AG04450 (cell line): ENCODE measurements at regions of chr19 and their contacts with region 1.

Region 1: DNA sequence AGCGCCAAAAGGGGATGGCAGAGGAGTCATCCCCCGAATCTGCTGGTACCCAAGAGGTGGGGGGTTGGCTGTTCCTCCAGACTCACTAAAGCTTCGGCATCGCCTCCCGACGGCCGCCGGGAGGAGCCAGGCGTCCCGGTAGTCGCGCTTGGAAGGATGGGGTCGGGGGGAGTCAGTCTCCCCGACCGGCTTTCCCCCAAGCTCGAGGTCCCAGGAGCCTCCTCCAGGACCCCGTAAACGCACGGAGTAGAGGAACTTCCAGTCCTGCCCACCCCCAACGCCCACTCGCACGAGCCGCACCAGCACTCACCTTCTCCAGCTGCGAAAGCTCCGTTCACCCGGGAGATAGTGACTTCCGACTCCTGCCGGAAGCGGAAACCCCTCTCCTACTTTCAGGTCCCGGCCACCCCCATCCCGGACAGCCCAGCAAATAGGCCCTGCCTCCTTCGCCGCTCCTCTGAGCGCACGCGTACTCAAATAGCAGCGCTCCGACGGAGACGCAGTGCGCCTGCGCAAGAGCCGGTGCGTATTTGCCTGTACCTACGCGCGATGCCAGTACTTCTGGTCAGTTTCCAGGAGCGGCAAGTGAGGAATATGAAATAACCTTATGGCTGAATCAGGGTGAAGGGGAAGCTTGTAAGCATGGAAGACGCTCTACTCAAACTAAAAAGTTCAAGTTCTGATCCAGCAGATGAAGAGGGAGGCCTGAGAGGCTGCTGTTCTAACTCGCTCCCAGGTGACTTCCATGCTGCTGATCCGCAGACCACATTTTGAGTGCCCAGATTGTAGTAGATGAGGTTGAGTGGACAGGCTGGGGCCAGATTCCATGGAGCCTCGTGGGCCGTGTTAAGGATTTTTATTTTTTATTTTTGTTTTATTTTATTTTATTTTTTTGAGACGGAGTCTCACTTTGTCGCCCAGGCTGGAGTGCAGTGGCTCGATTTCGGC is at the start of gene ELOF1:
- DNase-seq: peak; percentile 97
- H3K4me3 ChIP-seq: peak within 1 kb of the TSS; percentile 96
- H3K27ac ChIP-seq: peak within 1 kb of the TSS; percentile 47
- H3K27me3 ChIP-seq: no peaks in the 10 kb centered on the region
- CTCF ChIP-seq: peak; percentile 32
- polyA plus RNA-seq, gene ELOF1: 51.7 and 60.4 TPM in 2 replicates

Region 2: GRCh38 chr19:11535792-11536595 is 23.2 kb before region 1 on chr19:
- CTCF ChIA-PET with region 1: interaction called, 22 read pairs
- POLR2A ChIA-PET with region 1: interaction called, 3 read pairs
- DNase-seq: peak; percentile 70
- H3K4me3 ChIP-seq: peak overlapping the region; percentile 50
- H3K27ac ChIP-seq: peak overlapping the region; percentile 81
- H3K27me3 ChIP-seq: no peaks in the 10 kb centered on the region
- CTCF ChIP-seq: peak; percentile 82

Region 3: DNA sequence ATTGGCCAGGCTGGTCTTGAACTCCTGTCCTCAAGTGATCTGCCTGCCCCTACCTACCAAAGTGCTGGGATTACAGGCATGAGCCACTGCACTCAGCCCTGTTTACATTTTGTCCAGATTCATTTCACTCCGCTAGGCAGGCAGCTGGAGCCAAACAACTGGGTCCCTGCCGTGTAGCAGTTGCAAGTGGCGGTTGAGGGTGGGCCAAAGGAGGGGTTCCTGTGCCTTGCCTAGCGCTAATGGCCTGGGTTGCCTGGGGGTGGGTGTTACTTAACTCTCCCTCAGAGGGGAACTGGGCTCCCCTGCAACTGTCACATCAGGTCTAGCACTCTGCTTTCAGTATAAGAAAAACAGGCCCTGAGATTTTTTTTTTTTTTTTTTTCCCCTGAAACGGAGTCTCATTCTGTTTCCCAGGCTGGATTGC is 10.9 kb after region 1 on chr19:
- CTCF ChIA-PET with region 1: interaction called, 17 read pairs
- POLR2A ChIA-PET with region 1: no interaction called
- DNase-seq: no peak
- H3K4me3 ChIP-seq: no peak overlapping the region
- H3K27ac ChIP-seq: no peak overlapping the region
- H3K27me3 ChIP-seq: no peaks in the 10 kb centered on the region
- CTCF ChIP-seq: no peak

Region 4: DNA sequence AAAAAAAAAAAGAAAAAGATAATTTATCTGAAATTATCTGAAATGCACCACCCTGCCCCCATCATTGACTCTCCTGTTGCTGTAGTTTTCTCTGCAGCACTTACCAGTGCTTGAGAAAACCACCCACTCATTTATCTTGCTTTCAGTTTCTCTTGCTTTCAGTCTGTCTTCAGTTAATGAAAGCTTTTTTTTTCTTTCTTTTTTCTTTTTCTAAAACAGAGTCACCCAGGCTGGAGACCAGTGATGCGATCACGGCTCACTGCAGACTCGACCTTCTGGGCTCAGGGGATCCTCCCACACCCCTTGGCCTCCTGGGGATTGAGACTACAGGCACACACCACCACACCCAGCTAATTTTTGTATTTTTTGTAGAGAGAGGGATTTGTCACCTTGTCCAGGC is 22.6 kb after region 1 on chr19:
- CTCF ChIA-PET with region 1: interaction called, 11 read pairs
- POLR2A ChIA-PET with region 1: no interaction called
- DNase-seq: no peak
- H3K4me3 ChIP-seq: no peak overlapping the region
- H3K27ac ChIP-seq: no peak overlapping the region
- H3K27me3 ChIP-seq: no peaks in the 10 kb centered on the region
- CTCF ChIP-seq: no peak

Region 5: DNA sequence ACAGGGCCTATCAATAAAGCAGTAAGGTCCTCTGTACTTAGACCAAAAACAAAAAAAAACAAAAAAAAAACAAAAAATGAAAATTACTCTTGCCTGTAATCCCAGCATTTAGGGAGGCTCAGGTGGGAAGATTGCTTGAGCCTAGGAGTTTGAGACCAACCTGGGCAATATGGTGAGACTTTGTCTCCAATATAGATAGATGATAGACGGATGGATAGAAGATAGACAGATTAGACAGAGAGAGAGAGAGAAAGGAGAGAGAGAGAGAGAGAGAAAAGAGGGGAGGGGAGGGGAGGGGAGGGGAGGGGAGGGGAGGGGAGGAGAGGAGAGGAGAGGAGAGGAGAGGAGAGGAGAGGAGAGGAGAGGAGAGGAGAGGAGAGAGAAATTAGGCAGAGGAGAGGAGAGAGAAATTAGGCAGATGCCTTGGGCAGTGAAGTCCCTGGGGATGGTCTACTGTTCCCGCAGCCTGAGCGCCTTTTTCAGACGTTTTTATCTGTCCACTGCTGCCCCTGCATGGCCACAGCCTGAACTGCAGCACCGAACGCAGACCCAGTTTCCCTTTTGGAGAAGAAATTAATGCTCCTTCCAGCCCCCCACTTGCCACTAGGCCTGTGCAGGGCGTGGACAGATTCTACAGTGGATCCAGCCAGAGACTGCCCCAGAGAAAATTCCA is 28.3 kb after region 1 on chr19:
- CTCF ChIA-PET with region 1: interaction called, 14 read pairs
- POLR2A ChIA-PET with region 1: no interaction called
- DNase-seq: peak; percentile 20
- H3K4me3 ChIP-seq: no peak overlapping the region
- H3K27ac ChIP-seq: no peak overlapping the region
- H3K27me3 ChIP-seq: no peaks in the 10 kb centered on the region
- CTCF ChIP-seq: peak; percentile 92